Heart left ventricle (tissue), 16 donors: ENCODE measurements at regions of chr9 and their contacts with region 1.

Region 1: GRCh38 chr9:104968025-104968982 is 40.3 kb upstream of the ABCA1 start:
- DNase-seq: peak; percentile 86 to 94 (median 91)
- ATAC-seq: peak; percentile 95 to 98 (median 98)
- H3K4me3 ChIP-seq: peak overlapping the region in 11 of 12 donors; percentile 49 to 95 (median 79)
- H3K27ac ChIP-seq: peak overlapping the region; percentile 69 to 97 (median 86)
- H3K4me1 ChIP-seq: peaks cover 0 to 24% (median 8%) of the 10 kb centered on the region in 12 donors
- H3K27me3 ChIP-seq: no peaks in the 10 kb centered on the region
- CTCF ChIP-seq: peak in 1 of 12 donors; percentile 7
- POLR2A ChIP-seq: peak in 1 of 2 donors; percentile 11

Region 2: DNA sequence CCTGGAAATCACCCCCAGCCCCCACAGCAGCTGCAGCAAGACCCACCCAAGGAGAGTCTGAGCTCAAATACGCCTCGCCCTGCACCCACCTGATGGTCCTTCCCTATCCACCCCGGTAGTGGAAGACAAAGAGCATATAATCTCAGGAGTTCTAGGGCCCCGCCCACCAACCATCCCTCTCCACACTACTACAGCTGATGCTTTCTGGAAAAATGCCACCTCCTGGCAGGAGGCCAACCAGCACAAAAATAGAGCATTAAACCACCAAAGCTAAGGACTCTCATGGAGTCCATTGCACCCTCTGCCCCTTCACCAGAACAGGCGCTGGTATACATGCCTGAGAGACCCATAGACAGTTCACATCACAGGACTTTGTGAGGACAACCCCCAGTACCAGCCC is 243.3 kb before region 1 on chr9:
- intact Hi-C with region 1: no loop called
- DNase-seq: no peak
- ATAC-seq: no peak
- H3K4me3 ChIP-seq: no peak overlapping the region
- H3K27ac ChIP-seq: no peak overlapping the region
- H3K4me1 ChIP-seq: no peaks in the 10 kb centered on the region
- H3K27me3 ChIP-seq: no peaks in the 10 kb centered on the region
- CTCF ChIP-seq: no peak
- POLR2A ChIP-seq: no peak

Region 3: GRCh38 chr9:105114964-105115728 is 146.8 kb after region 1 on chr9:
- intact Hi-C with region 1: no loop called
- DNase-seq: peak in 4 of 5 donors; percentile 27 to 54 (median 44)
- ATAC-seq: peak; percentile 36 to 83 (median 59)
- H3K4me3 ChIP-seq: no peak overlapping the region
- H3K27ac ChIP-seq: peak overlapping the region in 1 of 12 donors; percentile 62
- H3K4me1 ChIP-seq: peaks cover 0 to 18% (median 0%) of the 10 kb centered on the region in 12 donors
- H3K27me3 ChIP-seq: no peaks in the 10 kb centered on the region
- CTCF ChIP-seq: no peak
- POLR2A ChIP-seq: no peak

Region 4: GRCh38 chr9:105141146-105141975 is 173.1 kb after region 1 on chr9:
- intact Hi-C with region 1: loop called in 1 of 10 experiments (anchors 10 kb)
- DNase-seq: peak in 1 of 5 donors; percentile 38
- ATAC-seq: peak in 3 of 4 donors; percentile 55 to 80 (median 63)
- H3K4me3 ChIP-seq: no peak overlapping the region
- H3K27ac ChIP-seq: peak overlapping the region in 1 of 12 donors; percentile 64
- H3K4me1 ChIP-seq: peaks cover 0 to 37% (median 7%) of the 10 kb centered on the region in 12 donors
- H3K27me3 ChIP-seq: no peaks in the 10 kb centered on the region
- CTCF ChIP-seq: no peak
- POLR2A ChIP-seq: no peak

Region 5: GRCh38 chr9:105438141-105438806 is 470.0 kb after region 1 on chr9:
- intact Hi-C with region 1: no loop called
- DNase-seq: no peak
- ATAC-seq: peak in 2 of 4 donors; percentile 31 to 62
- H3K4me3 ChIP-seq: no peak overlapping the region
- H3K27ac ChIP-seq: peak overlapping the region in 4 of 12 donors; percentile 2 to 46 (median 32)
- H3K4me1 ChIP-seq: peaks cover 0 to 30% (median 8%) of the 10 kb centered on the region in 12 donors
- H3K27me3 ChIP-seq: no peaks in the 10 kb centered on the region
- CTCF ChIP-seq: no peak
- POLR2A ChIP-seq: no peak

Region 6: DNA sequence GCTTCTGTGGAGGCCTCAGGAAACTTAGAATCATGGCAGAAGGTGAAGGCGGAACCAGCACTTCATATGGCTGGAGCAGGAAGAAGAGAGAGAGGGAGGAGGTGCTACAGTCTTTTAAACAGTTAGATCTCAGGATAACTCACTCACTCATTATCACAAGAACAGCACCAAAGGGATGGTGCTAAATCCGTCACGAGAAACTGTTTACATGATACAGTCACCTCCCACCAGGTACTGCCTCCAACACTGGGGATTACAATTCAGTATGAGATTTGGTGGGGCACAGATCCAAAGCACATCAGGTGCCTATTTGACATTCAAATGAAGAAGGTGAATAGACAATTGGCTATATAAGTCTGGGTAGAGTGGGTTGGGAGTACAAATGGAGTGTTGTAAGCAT is 624.8 kb after region 1 on chr9:
- intact Hi-C with region 1: no loop called
- DNase-seq: no peak
- ATAC-seq: no peak
- H3K4me3 ChIP-seq: no peak overlapping the region
- H3K27ac ChIP-seq: no peak overlapping the region
- H3K4me1 ChIP-seq: no peaks in the 10 kb centered on the region
- H3K27me3 ChIP-seq: no peaks in the 10 kb centered on the region
- CTCF ChIP-seq: no peak
- POLR2A ChIP-seq: no peak